ENCODE measurements at regions of chr15 and their contacts with region 1.

Region 1: DNA sequence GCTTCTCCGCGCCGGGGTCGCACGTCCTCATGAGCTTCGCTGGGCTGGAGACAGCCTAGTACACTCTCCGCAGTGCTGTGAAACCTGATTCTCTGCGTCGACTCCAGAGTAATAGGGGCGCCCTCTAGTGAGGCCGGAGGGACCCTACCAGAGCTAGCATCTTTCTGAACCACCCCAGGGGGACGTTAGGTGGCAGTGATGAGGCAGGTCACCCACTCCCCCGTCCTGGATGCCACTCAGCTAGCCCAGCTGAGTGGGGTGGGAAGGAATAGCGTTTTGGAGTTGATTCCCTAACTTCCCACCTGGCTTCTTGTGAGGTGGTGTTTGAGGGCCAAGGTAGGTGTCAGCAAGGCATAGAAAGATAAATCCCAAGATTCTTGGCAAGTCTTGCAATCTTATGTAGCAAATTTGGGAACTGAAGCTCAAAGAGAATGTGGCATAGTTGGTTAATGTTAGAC is 4.0 kb downstream of the DUOXA2 start:
- DNase-seq: peak; percentile 92
- ATAC-seq: peak; percentile 98
- H3K4me3 ChIP-seq: peak overlapping the region in 3 of 5 experiments; percentile 36 to 60 (median 44)
- H3K4me3 Mint-ChIP-seq: peak overlapping the region; percentile 80
- H3K27ac ChIP-seq: no peak overlapping the region
- H3K27ac Mint-ChIP-seq: no peak overlapping the region
- H3K4me1 ChIP-seq: peaks cover 38 to 45% of the 10 kb centered on the region in 2 donors
- H3K4me1 Mint-ChIP-seq: peaks cover 36% of the 10 kb centered on the region
- H3K27me3 ChIP-seq: peaks cover 0 to 70% (median 47%) of the 10 kb centered on the region in 4 experiments
- H3K27me3 Mint-ChIP-seq: peaks cover 69% of the 10 kb centered on the region
- CTCF ChIP-seq: peak; percentile 100

Region 2: DNA sequence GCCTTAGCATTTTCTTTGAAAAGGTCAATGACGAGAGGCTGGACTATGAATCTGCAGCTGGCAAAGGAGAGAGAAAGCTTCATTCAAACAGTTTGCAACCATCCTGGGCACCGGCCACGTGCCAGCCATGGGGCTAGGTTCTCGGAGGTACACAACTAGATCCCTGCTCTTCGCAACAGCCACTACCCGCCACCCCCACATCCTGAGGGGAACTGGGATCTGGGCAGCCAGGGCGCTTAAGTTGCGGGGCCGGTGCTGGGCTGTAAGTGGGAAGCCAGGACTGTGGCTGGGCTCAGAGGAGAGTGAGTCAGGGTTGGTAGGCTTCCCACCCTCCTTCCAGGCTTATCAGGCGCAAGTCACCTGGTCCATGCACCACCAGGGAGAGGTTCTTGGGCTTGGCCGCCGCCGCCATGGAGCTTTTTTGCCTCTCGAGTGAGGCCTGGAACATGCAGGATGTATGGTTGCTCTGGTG is 256.7 kb before region 1 on chr15:
- CTCF ChIA-PET with region 1: no interaction called
- POLR2A ChIA-PET with region 1: no interaction called
- intact Hi-C with region 1: no loop called
- DNase-seq: no peak
- ATAC-seq: no peak
- H3K4me3 ChIP-seq: no peak overlapping the region
- H3K4me3 Mint-ChIP-seq: no peak overlapping the region
- H3K27ac ChIP-seq: no peak overlapping the region
- H3K27ac Mint-ChIP-seq: no peak overlapping the region
- H3K4me1 ChIP-seq: no peaks in the 10 kb centered on the region
- H3K4me1 Mint-ChIP-seq: no peaks in the 10 kb centered on the region
- H3K27me3 ChIP-seq: no peaks in the 10 kb centered on the region
- H3K27me3 Mint-ChIP-seq: no peaks in the 10 kb centered on the region
- CTCF ChIP-seq: no peak

Region 3: DNA sequence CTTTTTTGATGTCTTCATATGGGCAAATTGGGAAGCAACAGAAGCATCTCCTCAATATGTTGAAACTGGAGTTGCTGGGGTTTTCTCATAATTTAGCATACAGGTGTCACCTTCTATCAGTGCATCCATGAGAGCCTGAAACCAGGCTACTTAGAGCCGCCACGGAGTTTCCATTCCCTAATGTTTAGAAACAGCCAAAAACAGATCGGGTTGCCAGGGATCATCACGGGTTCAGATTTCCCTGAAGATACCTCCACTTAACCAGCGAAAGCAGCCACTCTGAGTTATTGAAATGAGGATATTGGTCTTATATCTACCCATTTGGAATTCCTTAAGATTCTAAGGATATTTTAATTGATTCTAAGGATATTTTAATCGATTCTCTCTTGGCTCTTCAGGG is 147.1 kb before region 1 on chr15:
- CTCF ChIA-PET with region 1: interaction called, 58 read pairs
- POLR2A ChIA-PET with region 1: no interaction called
- intact Hi-C with region 1: loop called (anchors 2 kb)
- DNase-seq: no peak
- ATAC-seq: no peak
- H3K4me3 ChIP-seq: no peak overlapping the region
- H3K4me3 Mint-ChIP-seq: no peak overlapping the region
- H3K27ac ChIP-seq: no peak overlapping the region
- H3K27ac Mint-ChIP-seq: no peak overlapping the region
- H3K4me1 ChIP-seq: no peaks in the 10 kb centered on the region
- H3K4me1 Mint-ChIP-seq: no peaks in the 10 kb centered on the region
- H3K27me3 ChIP-seq: no peaks in the 10 kb centered on the region
- H3K27me3 Mint-ChIP-seq: peaks cover 9% of the 10 kb centered on the region
- CTCF ChIP-seq: no peak

Region 4: DNA sequence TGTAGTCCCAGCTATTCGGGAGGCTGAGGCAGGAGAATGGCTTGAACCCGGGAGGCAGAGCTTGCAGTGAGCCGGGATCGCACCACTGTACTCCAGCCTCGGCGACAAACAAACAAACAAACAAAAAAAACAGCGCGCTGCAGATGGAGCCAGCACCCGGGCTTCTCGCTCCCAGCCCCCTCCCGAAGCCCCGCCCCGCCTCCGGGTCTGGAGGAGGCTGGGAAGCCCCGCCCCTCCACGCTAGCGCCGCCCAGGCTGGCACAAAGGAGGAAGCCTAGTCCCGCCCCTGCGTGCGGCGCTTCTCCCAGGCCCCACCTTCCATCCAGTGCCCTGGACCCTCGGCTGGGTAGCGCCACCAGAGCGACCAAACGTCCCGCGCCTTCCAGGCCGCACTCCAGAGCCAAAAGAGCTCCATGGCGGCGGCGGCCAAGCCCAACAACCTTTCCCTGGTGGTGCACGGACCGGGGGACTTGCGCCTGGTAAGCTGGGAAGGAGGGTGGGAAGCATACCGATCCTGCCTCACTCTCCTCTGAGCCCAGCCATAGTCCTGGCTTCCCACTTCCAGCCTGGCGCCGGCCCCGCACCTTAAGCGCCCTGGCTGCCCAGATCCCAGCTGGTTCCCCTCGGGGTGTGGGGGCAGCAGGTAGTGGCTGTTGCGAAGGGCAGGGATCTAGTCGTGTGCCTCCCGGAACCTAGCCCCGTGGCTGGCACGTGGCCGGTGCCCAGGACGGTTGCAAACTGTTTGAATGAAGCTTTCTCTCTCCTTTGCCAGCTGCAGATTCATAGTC is 95.1 kb before region 1 on chr15 and contains the start of gene SORD:
- CTCF ChIA-PET with region 1: interaction called, 21 read pairs
- POLR2A ChIA-PET with region 1: interaction called, 3 read pairs
- intact Hi-C with region 1: no loop called
- DNase-seq: peak; percentile 89
- ATAC-seq: peak; percentile 100
- H3K4me3 ChIP-seq: peak within 1 kb of the TSS; percentile 51 to 92 (median 90)
- H3K4me3 Mint-ChIP-seq: peak within 1 kb of the TSS; percentile 92
- H3K27ac ChIP-seq: peak within 1 kb of the TSS; percentile 50 to 72
- H3K27ac Mint-ChIP-seq: peak within 1 kb of the TSS; percentile 78
- H3K4me1 ChIP-seq: peaks cover 12 to 16% of the 10 kb centered on the region in 2 donors
- H3K4me1 Mint-ChIP-seq: peaks cover 28% of the 10 kb centered on the region
- H3K27me3 ChIP-seq: no peaks in the 10 kb centered on the region
- H3K27me3 Mint-ChIP-seq: peaks cover 18% of the 10 kb centered on the region
- CTCF ChIP-seq: no peak
- total RNA-seq, gene SORD: 24.3 and 25.8 TPM in 2 replicates

Region 5: GRCh38 chr15:45048794-45049631 is 69.1 kb before region 1 on chr15:
- CTCF ChIA-PET with region 1: interaction called, 28 read pairs
- POLR2A ChIA-PET with region 1: interaction called, 3 read pairs
- intact Hi-C with region 1: no loop called
- DNase-seq: peak; percentile 90
- ATAC-seq: peak; percentile 86
- H3K4me3 ChIP-seq: peak overlapping the region; percentile 11 to 62 (median 40)
- H3K4me3 Mint-ChIP-seq: peak overlapping the region; percentile 80
- H3K27ac ChIP-seq: peak overlapping the region; percentile 92 to 95
- H3K27ac Mint-ChIP-seq: peak overlapping the region; percentile 97
- H3K4me1 ChIP-seq: peaks cover 37 to 42% of the 10 kb centered on the region in 2 donors
- H3K4me1 Mint-ChIP-seq: peaks cover 34% of the 10 kb centered on the region
- H3K27me3 ChIP-seq: no peaks in the 10 kb centered on the region
- H3K27me3 Mint-ChIP-seq: no peaks in the 10 kb centered on the region
- CTCF ChIP-seq: no peak

Region 6: GRCh38 chr15:45279024-45279698 is 161.0 kb after region 1 on chr15:
- CTCF ChIA-PET with region 1: interaction called, 13 read pairs
- POLR2A ChIA-PET with region 1: no interaction called
- intact Hi-C with region 1: no loop called
- DNase-seq: peak; percentile 97
- ATAC-seq: peak; percentile 99
- H3K4me3 ChIP-seq: peak overlapping the region; percentile 58 to 88 (median 69)
- H3K4me3 Mint-ChIP-seq: peak overlapping the region; percentile 94
- H3K27ac ChIP-seq: peak overlapping the region; percentile 66 to 68
- H3K27ac Mint-ChIP-seq: peak overlapping the region; percentile 88
- H3K4me1 ChIP-seq: peaks cover 12 to 16% of the 10 kb centered on the region in 2 donors
- H3K4me1 Mint-ChIP-seq: peaks cover 13% of the 10 kb centered on the region
- H3K27me3 ChIP-seq: peaks cover 0 to 5% (median 0%) of the 10 kb centered on the region in 4 experiments
- H3K27me3 Mint-ChIP-seq: peaks cover 9% of the 10 kb centered on the region
- CTCF ChIP-seq: no peak

Region 7: GRCh38 chr15:45604326-45604725 is 486.2 kb after region 1 on chr15:
- CTCF ChIA-PET with region 1: no interaction called
- POLR2A ChIA-PET with region 1: no interaction called
- intact Hi-C with region 1: no loop called
- DNase-seq: no peak
- ATAC-seq: peak; percentile 17
- H3K4me3 ChIP-seq: no peak overlapping the region
- H3K4me3 Mint-ChIP-seq: peak overlapping the region; percentile 5
- H3K27ac ChIP-seq: peak overlapping the region; percentile 55 to 62
- H3K27ac Mint-ChIP-seq: peak overlapping the region; percentile 64
- H3K4me1 ChIP-seq: peaks cover 31 to 40% of the 10 kb centered on the region in 2 donors
- H3K4me1 Mint-ChIP-seq: peaks cover 43% of the 10 kb centered on the region
- H3K27me3 ChIP-seq: no peaks in the 10 kb centered on the region
- H3K27me3 Mint-ChIP-seq: no peaks in the 10 kb centered on the region
- CTCF ChIP-seq: no peak

Region 8: DNA sequence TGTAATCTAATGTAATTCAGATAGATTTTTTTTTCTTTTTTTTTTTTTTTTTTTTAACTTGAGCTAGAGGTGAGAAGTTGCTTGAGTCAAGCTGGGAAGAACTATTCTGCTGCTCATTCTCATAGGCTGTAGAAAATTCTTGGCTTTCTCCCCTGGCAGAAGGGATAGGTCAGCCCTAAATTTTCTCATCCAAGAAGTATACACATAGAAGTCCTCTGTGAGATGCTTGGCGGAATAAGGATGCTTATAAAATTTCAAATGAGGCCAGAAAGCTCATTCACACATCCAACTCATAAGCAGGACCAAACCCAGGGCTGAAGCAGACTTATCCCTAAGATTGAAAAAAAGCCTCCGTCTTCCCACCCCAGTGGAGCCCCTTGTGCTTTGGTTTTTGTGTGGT is 1089.2 kb after region 1 on chr15:
- CTCF ChIA-PET with region 1: no interaction called
- POLR2A ChIA-PET with region 1: no interaction called
- intact Hi-C with region 1: no loop called
- DNase-seq: no peak
- ATAC-seq: no peak
- H3K4me3 ChIP-seq: no peak overlapping the region
- H3K4me3 Mint-ChIP-seq: no peak overlapping the region
- H3K27ac ChIP-seq: no peak overlapping the region
- H3K27ac Mint-ChIP-seq: no peak overlapping the region
- H3K4me1 ChIP-seq: no peaks in the 10 kb centered on the region
- H3K4me1 Mint-ChIP-seq: no peaks in the 10 kb centered on the region
- H3K27me3 ChIP-seq: no peaks in the 10 kb centered on the region
- H3K27me3 Mint-ChIP-seq: no peaks in the 10 kb centered on the region
- CTCF ChIP-seq: no peak